WTC11 (cell line): ENCODE measurements at regions of chr17 and their contacts with region 1.

Region 1: GRCh38 chr17:1724506-1725362 is at the start of gene WDR81:
- DNase-seq: peak; percentile 89
- ATAC-seq: peak; percentile 64
- H3K4me3 Mint-ChIP-seq: peak within 1 kb of the TSS; percentile 62
- H3K27ac Mint-ChIP-seq: no peak within 1 kb of the TSS
- H3K4me1 Mint-ChIP-seq: peaks cover 4% of the 10 kb centered on the region; the same call in 1 of the 2 replicates
- H3K27me3 Mint-ChIP-seq: no peaks in the 10 kb centered on the region; the same call in 1 of the 2 replicates
- CTCF ChIP-seq: no peak
- total RNA-seq, gene WDR81: 14.0 to 16.4 TPM (median 15.1 TPM) in 3 replicates

Region 2: DNA sequence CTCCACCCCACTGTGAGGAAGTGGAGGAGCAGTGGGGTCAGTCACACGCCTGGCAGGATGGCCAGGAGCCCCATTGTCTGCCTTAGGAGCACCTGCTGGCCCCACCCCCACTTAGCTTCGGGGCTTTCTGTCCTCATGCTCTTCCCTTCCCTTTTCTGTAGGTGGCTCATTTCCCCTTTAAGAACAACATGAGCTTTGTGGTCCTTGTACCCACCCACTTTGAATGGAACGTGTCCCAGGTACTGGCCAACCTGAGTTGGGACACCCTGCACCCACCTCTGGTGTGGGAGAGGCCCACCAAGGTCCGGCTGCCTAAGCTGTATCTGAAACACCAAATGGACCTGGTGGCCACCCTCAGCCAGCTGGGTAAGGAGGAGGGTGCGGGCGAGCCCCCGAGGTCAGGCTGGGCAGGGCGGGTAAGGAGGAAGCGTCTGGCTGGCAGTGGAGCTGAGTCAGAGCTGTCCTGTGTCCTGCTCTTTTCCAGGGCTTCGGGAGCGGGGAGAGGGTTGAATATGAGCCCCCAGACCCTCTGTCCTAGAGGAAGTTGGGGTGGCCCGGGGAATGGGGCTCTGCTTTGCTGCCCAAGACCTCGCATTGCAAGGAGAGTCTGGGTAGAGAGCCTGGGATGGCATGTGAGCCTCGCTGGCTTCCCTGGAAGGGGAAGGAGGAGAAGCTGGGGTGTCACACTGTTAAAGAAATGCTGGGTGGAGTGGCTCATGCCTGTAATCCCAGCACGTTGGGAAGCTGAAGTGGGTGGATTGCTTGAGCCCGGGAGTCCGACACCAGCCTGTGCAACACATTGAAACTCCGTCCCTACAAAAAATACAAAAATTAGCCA is 27.9 kb after region 1 on chr17:
- CTCF ChIA-PET with region 1: interaction called, 11 read pairs
- POLR2A ChIA-PET with region 1: interaction called, 3 read pairs
- DNase-seq: no peak
- ATAC-seq: peak; percentile 57
- H3K4me3 Mint-ChIP-seq: peak overlapping the region; percentile 36
- H3K27ac Mint-ChIP-seq: peak overlapping the region; percentile 36; the same call in 1 of the 2 replicates
- H3K4me1 Mint-ChIP-seq: peaks cover 10% of the 10 kb centered on the region
- H3K27me3 Mint-ChIP-seq: no peaks in the 10 kb centered on the region
- CTCF ChIP-seq: no peak

Region 3: DNA sequence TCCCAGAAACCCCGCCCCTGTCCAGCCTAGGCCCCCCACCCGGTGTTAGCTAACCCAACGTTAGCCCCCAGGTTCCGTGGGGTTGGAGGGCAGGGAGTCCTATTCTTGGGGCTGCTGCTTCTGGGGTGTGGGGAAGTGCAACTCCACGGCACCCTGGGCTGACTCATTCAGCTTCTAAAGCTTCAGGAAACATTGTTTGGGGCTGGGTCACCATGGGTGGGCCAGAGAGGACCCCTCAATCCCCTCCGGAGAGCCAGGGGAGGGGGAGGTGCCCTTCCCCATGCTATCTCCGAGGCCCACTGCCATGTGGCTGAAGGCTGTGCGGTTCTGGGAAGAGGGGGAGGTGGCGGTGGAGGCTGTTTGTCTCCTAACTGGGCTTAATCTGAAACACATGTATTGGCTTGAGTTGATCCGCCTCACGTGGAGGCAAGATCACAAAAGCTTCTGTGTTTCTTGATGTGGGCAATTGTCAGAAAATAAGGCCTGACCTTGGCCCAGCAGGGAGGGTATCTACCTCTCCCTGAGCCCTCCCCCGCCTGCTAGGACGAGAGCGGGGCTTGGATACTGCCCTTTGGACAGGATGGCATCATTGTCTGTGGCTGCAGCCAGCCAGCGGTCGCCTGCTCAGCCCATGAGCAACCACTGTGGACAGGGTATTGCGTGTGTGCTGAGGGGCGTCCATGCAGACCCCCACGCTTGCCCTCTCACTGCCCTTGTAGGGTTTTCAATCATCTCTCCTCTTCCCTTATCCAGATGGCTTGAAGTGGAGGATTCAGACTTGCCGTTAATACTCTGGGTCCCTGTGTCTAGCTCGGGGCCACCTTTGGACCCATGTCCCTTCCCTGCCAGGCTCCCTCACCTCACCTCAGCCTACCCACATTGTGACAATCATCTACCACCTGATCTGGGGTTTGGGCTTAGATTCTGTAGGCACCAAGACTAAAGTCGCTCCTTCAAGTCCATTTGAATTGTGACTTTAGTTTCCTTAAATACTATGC is 38.5 kb after region 1 on chr17:
- CTCF ChIA-PET with region 1: interaction called, 14 read pairs
- POLR2A ChIA-PET with region 1: no interaction called
- DNase-seq: no peak
- ATAC-seq: peak; percentile 47
- H3K4me3 Mint-ChIP-seq: peak overlapping the region; percentile 10; the same call in 1 of the 2 replicates
- H3K27ac Mint-ChIP-seq: peak overlapping the region; percentile 66; the same call in 1 of the 2 replicates
- H3K4me1 Mint-ChIP-seq: peaks cover 21% of the 10 kb centered on the region
- H3K27me3 Mint-ChIP-seq: no peaks in the 10 kb centered on the region
- CTCF ChIP-seq: no peak

Region 4: DNA sequence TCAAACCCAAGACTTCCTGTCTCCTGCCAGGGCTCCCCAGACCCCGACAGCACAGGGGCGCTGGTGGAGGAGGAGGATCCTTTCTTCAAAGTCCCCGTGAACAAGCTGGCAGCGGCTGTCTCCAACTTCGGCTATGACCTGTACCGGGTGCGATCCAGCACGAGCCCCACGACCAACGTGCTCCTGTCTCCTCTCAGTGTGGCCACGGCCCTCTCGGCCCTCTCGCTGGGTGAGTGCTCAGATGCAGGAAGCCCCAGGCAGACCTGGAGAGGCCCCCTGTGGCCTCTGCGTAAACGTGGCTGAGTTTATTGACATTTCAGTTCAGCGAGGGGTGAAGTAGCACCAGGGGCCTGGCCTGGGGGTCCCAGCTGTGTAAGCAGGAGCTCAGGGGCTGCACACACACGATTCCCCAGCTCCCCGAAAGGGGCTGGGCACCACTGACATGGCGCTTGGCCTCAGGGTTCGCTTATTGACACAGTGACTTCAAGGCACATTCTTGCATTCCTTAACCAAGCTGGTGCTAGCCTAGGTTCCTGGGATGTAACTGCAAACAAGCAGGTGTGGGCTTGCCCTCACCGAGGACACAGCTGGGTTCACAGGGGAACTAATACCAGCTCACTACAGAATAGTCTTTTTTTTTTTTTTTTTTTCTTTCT is 45.2 kb after region 1 on chr17:
- CTCF ChIA-PET with region 1: interaction called, 18 read pairs
- POLR2A ChIA-PET with region 1: no interaction called
- DNase-seq: peak; percentile 65
- ATAC-seq: peak; percentile 87
- H3K4me3 Mint-ChIP-seq: peak overlapping the region; percentile 50
- H3K27ac Mint-ChIP-seq: peak overlapping the region; percentile 93
- H3K4me1 Mint-ChIP-seq: peaks cover 15% of the 10 kb centered on the region
- H3K27me3 Mint-ChIP-seq: no peaks in the 10 kb centered on the region
- CTCF ChIP-seq: no peak

Region 5: GRCh38 chr17:1783834-1784611 is 59.3 kb after region 1 on chr17:
- CTCF ChIA-PET with region 1: interaction called, 60 read pairs
- POLR2A ChIA-PET with region 1: interaction called, 4 read pairs
- DNase-seq: no peak
- ATAC-seq: peak; percentile 86
- H3K4me3 Mint-ChIP-seq: no peak overlapping the region
- H3K27ac Mint-ChIP-seq: peak overlapping the region; percentile 69
- H3K4me1 Mint-ChIP-seq: no peaks in the 10 kb centered on the region
- H3K27me3 Mint-ChIP-seq: no peaks in the 10 kb centered on the region
- CTCF ChIP-seq: 0 out of 2 replicates have a peak, but pooled peaks have one; percentile 15

Region 6: DNA sequence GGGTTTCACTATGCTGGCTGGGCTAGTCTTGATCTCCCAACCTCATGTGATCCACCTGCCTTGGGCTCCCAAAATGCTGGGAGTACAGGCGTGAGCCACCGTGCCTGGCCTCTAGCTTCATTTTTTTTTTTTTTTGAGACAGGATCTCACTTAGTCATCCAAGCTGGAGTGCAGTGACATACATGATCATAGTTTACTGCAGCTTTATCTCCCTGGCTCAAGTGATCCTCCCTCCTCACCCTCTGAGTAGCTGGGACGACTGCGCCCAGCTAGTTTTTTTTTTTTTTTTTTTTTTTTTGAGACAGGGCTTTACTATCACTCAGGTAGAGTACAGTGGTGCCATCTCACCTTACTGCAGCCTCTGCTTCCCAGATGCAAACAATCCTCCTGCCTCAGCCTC is 114.8 kb after region 1 on chr17:
- CTCF ChIA-PET with region 1: no interaction called
- POLR2A ChIA-PET with region 1: no interaction called
- DNase-seq: no peak
- ATAC-seq: no peak
- H3K4me3 Mint-ChIP-seq: no peak overlapping the region
- H3K27ac Mint-ChIP-seq: no peak overlapping the region
- H3K4me1 Mint-ChIP-seq: no peaks in the 10 kb centered on the region
- H3K27me3 Mint-ChIP-seq: no peaks in the 10 kb centered on the region
- CTCF ChIP-seq: no peak